IMR-90 (cell line): ENCODE measurements at regions of chr3 and their contacts with region 1.

Region 1: DNA sequence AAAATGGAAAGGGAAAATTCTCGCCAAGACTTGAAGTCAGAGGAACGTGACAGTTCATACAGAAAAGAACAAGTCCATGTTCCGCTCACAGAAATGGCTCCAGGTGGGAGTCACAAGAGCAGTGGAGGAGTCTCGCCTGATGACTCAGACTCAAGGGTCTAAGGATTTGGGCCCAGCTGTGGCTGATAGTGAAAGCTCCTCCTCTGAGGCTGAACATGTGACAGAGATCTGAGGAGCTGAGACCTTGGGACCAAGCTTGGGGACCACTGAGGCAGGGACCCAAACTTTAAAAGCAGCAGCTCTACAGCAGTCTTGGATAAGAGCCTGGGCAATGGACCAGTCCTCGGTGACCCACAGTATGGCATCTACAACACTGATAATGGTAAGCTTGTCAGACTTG is 9.3 kb upstream of the VEPH1 start:
- DNase-seq: no peak
- ATAC-seq: no peak
- H3K4me3 ChIP-seq: no peak overlapping the region
- H3K27ac ChIP-seq: no peak overlapping the region
- H3K4me1 ChIP-seq: no peaks in the 10 kb centered on the region
- H3K27me3 ChIP-seq: no peaks in the 10 kb centered on the region
- CTCF ChIP-seq: no peak
- POLR2A ChIP-seq: no peak
- RAD21 ChIP-seq: no peak

Region 2: DNA sequence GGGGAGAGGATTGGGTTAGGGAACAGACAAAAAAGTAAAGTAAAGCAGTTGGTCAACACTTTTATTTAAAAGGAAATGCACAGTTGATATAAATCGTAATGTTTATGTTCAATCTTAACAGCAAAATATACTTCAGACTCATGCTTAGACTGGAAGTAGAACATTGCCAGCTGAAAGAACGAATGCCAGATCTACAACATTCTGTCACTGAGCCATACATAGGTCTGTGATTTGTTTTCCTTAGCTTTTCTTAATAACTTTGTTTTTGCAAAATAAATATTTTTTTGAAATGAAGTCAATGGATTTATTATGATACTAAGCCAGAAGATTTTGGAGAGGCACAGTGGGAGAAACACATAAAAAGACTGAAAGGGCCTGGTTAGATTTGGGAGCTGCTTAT is 624.4 kb before region 1 on chr3:
- CTCF ChIA-PET with region 1: no interaction called
- POLR2A ChIA-PET with region 1: no interaction called
- dilution Hi-C with region 1: no loop called
- in situ Hi-C with region 1: no loop called
- intact Hi-C with region 1: loop called (anchors 5 kb)
- DNase-seq: no peak
- ATAC-seq: no peak
- H3K4me3 ChIP-seq: no peak overlapping the region
- H3K27ac ChIP-seq: no peak overlapping the region
- H3K4me1 ChIP-seq: no peaks in the 10 kb centered on the region
- H3K27me3 ChIP-seq: no peaks in the 10 kb centered on the region
- CTCF ChIP-seq: no peak
- POLR2A ChIP-seq: no peak
- RAD21 ChIP-seq: no peak